ENCODE measurements at regions of chr10 and their contacts with region 1.

Region 1: DNA sequence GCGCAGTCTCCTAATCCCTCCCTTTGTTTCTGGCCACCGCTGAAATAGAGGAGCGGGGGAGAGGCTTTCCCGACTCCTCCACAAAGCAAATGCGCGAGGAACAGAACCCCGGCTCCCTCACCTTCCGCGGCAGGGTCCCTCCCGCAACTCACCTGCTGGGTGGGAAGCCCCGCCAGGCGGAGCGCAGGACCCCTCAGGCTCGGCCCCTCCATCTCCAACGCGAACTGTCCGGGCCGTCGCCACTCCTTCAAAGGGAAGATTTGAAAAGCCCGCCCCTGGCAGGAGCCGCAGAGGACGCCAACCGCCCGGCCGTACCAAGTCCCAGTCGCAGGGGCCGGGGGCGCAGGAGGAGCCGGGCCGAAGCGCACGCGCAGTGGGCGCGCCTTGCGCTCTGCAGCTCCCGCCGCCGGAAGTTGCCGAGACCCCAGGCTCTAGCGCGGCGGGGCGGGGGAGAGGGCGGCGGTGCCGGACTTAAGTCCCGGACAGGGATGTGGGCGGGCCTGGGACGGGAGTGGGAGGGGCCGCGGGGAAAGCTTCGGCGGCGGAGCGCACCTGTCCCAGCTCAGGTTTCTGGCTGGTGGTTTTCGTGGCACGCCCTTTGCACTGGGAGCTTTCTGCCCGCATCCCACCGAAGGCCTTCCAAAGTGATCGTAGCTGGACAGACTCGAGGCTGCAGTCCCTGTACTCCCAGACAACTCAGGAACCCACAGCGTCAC is at the start of gene RTKN2:
- DNase-seq: peak; percentile 88
- H3K4me3 ChIP-seq: peak within 1 kb of the TSS; percentile 67 to 93 (median 90)
- H3K27ac ChIP-seq: peak within 1 kb of the TSS; percentile 33
- H3K4me1 ChIP-seq: peaks cover 29% of the 10 kb centered on the region
- H3K27me3 ChIP-seq: no peaks in the 10 kb centered on the region
- CTCF ChIP-seq: no peak
- total RNA-seq, gene RTKN2: 2.7 to 4.5 TPM

Region 2: GRCh38 chr10:61153771-61154170 is 1114.8 kb before region 1 on chr10:
- CTCF ChIA-PET with region 1: no interaction called
- dilution Hi-C with region 1: no loop called
- in situ Hi-C with region 1: no loop called
- intact Hi-C with region 1: no loop called
- DNase-seq: no peak
- H3K4me3 ChIP-seq: no peak overlapping the region
- H3K27ac ChIP-seq: no peak overlapping the region
- H3K4me1 ChIP-seq: no peaks in the 10 kb centered on the region
- H3K27me3 ChIP-seq: no peaks in the 10 kb centered on the region
- CTCF ChIP-seq: no peak

Region 3: DNA sequence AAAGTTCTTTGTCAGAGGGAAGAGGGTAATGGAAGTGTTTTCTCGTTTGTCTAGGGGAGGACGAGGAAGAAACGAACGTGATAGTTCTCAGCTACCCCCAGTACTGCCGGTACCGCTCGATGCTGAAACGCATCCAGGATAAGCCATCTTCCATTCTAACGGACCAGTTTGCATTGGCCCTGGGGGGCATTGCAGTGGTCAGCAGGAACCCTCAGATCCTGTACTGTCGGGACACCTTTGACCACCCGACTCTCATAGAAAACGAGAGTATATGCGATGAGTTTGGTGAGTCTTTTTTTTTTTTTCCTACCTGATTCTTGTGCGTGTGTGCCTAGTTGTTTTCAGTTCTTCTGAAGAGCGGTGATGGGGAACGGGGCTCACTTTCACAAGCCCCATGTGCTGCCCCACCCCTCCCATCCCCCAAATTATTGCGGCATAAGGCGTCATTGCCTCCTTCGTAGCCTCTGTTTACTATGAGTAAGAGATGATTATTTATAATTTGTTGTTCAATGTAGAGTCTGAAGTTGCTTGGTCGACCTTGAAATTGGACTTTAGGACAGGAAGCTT is 268.4 kb before region 1 on chr10:
- CTCF ChIA-PET with region 1: no interaction called
- dilution Hi-C with region 1: no loop called
- in situ Hi-C with region 1: no loop called
- intact Hi-C with region 1: no loop called
- DNase-seq: no peak
- H3K4me3 ChIP-seq: no peak overlapping the region
- H3K27ac ChIP-seq: no peak overlapping the region
- H3K4me1 ChIP-seq: peaks cover 3% of the 10 kb centered on the region
- H3K27me3 ChIP-seq: no peaks in the 10 kb centered on the region
- CTCF ChIP-seq: no peak

Region 4: GRCh38 chr10:62373995-62374861 is 105.7 kb after region 1 on chr10 and contains the start of gene ZNF365:
- CTCF ChIA-PET with region 1: interaction called, 3 read pairs
- dilution Hi-C with region 1: loop called (anchors 5 kb)
- in situ Hi-C with region 1: loop called in 1 of 2 experiments (anchors 25 kb)
- intact Hi-C with region 1: loop called (anchors 1 kb)
- DNase-seq: peak; percentile 78
- H3K4me3 ChIP-seq: peak within 1 kb of the TSS; percentile 26 to 72 (median 66)
- H3K27ac ChIP-seq: peak within 1 kb of the TSS; percentile 61
- H3K4me1 ChIP-seq: peaks cover 30% of the 10 kb centered on the region
- H3K27me3 ChIP-seq: no peaks in the 10 kb centered on the region
- CTCF ChIP-seq: no peak
- total RNA-seq, gene ZNF365: 10.1 to 13.0 TPM

Region 5: DNA sequence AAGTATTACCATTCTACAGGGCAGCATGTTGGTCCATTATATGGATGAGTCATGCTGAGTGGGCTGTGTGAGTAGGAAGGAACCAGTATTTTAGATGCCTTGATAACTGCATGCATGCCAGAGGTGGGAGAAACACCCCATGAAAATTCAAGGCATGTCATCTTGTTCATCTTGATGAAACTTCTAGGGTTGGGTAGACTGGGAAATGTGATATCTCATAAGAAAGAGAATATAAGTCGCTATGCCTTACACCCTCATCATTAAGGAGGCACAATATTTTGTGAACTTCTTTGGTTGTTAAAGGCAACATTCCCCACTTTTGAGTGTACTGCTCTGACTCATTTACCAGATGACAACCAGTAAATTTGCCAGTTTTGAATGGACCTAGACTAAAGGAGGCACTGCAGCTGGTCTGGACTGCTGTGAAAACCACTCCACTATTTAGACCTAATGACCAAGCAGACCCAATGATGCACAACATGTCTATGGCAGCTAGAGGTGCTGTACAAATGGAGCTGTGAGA is 153.6 kb after region 1 on chr10:
- CTCF ChIA-PET with region 1: no interaction called
- dilution Hi-C with region 1: no loop called
- in situ Hi-C with region 1: no loop called
- intact Hi-C with region 1: loop called (anchors 1 kb)
- DNase-seq: peak; percentile 88
- H3K4me3 ChIP-seq: no peak overlapping the region
- H3K27ac ChIP-seq: peak overlapping the region; percentile 59
- H3K4me1 ChIP-seq: peaks cover 30% of the 10 kb centered on the region
- H3K27me3 ChIP-seq: no peaks in the 10 kb centered on the region
- CTCF ChIP-seq: peak; percentile 11

Region 6: GRCh38 chr10:63268798-63269503 is 1000.4 kb after region 1 on chr10:
- CTCF ChIA-PET with region 1: no interaction called
- dilution Hi-C with region 1: no loop called
- in situ Hi-C with region 1: no loop called
- intact Hi-C with region 1: no loop called
- DNase-seq: peak; percentile 96
- H3K4me3 ChIP-seq: peak overlapping the region; percentile 49 to 100 (median 97)
- H3K27ac ChIP-seq: peak overlapping the region; percentile 98
- H3K4me1 ChIP-seq: peaks cover 5% of the 10 kb centered on the region
- H3K27me3 ChIP-seq: no peaks in the 10 kb centered on the region
- CTCF ChIP-seq: peak; percentile 32 to 41

Measured in mammary epithelial cell (primary cell).